Activated CD4-positive, alpha-beta T cell treated with anti-CD3 and anti-CD28 coated beads, Interleukin-2, amount 10 ng/mL, durations not matched to agents 24 days and 14 days (primary cell): ENCODE measurements at regions of chr5 and their contacts with region 1.

Region 1: DNA sequence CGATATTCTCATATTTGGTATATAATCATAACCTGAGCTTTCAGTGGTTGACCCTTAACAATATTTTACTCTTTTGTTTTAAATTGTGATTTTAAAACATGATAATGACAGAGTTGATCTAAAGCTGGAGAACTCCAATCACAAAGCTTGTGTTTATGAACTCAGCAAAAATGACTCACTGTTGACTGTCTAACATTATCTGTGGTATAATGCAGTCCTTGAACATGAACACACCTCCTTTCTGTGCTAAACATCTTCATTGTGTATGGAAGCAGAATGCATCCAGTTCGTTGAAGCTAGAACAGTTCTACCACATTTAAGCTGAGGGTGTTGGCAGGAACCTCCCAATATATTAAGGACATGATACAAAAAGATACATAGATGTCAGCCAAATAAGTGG is 1030.2 kb upstream of the SEMA6A start:
- DNase-seq: no peak
- H3K4me3 Mint-ChIP-seq: no peak overlapping the region
- H3K27ac Mint-ChIP-seq: no peak overlapping the region
- H3K4me1 Mint-ChIP-seq: no peaks in the 10 kb centered on the region
- H3K27me3 Mint-ChIP-seq: no peaks in the 10 kb centered on the region

Region 2: GRCh38 chr5:117539692-117540091 is 65.2 kb before region 1 on chr5:
- intact Hi-C with region 1: no loop called
- DNase-seq: no peak
- H3K4me3 Mint-ChIP-seq: no peak overlapping the region
- H3K27ac Mint-ChIP-seq: no peak overlapping the region
- H3K4me1 Mint-ChIP-seq: no peaks in the 10 kb centered on the region
- H3K27me3 Mint-ChIP-seq: no peaks in the 10 kb centered on the region

Region 3: GRCh38 chr5:117562647-117563046 is 42.2 kb before region 1 on chr5:
- intact Hi-C with region 1: loop called (anchors 1 kb)
- DNase-seq: no peak
- H3K4me3 Mint-ChIP-seq: no peak overlapping the region
- H3K27ac Mint-ChIP-seq: no peak overlapping the region
- H3K4me1 Mint-ChIP-seq: no peaks in the 10 kb centered on the region
- H3K27me3 Mint-ChIP-seq: no peaks in the 10 kb centered on the region